ENCODE measurements at regions of chr6 and their contacts with region 1.

Region 1: GRCh38 chr6:27545271-27546046 is 72.6 kb upstream of the ZNF184 start:
- DNase-seq: peak; percentile 90
- ATAC-seq: peak; percentile 80
- H3K4me3 ChIP-seq: peak overlapping the region; percentile 68 to 80 (median 78)
- H3K27ac ChIP-seq: peak overlapping the region; percentile 55
- H3K4me1 ChIP-seq: peaks cover 29% of the 10 kb centered on the region
- H3K27me3 ChIP-seq: no peaks in the 10 kb centered on the region; a peak in 1 of 5 replicates
- CTCF ChIP-seq: no peak
- EP300 ChIP-seq: no peak
- POLR2A ChIP-seq: no peak
- RAD21 ChIP-seq: no peak

Region 2: GRCh38 chr6:27479319-27480182 is 65.9 kb before region 1 on chr6:
- CTCF ChIA-PET with region 1: no interaction called
- POLR2A ChIA-PET with region 1: no interaction called
- in situ Hi-C with region 1: no loop called
- intact Hi-C with region 1: loop called (anchors 2 kb)
- DNase-seq: peak; percentile 85
- ATAC-seq: peak; percentile 82
- H3K4me3 ChIP-seq: peak overlapping the region; percentile 80 to 87 (median 81)
- H3K27ac ChIP-seq: peak overlapping the region; percentile 74
- H3K4me1 ChIP-seq: peaks cover 26% of the 10 kb centered on the region
- H3K27me3 ChIP-seq: no peaks in the 10 kb centered on the region; a peak in 1 of 5 replicates
- CTCF ChIP-seq: no peak
- EP300 ChIP-seq: peak in 1 of 2 experiments; percentile 32; a peak in 1 of 4 replicates
- POLR2A ChIP-seq: no peak; a peak in 2 of 4 replicates
- RAD21 ChIP-seq: peak; percentile 16; the same call in 1 of the 2 replicates

Region 3: DNA sequence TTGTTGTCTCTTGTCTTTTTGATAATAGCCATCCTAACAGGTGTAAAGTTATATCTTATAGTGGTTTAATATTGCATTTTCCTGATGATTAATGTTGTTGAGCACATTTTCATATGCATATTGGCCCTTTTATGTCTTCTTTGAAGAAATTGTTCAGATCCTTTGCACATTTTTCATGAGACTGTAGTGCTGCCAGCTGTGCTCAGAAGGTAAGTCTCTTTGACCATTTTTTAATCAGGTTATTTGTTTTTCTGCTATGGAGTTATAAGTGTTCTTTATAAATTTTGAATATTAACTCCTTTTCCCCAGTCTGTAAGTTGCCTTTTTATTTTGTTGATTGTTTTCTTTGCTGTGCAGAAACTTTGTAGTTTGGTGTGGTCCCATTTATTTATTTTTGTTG is 16.7 kb before region 1 on chr6:
- CTCF ChIA-PET with region 1: no interaction called
- POLR2A ChIA-PET with region 1: no interaction called
- in situ Hi-C with region 1: no loop called
- intact Hi-C with region 1: loop called (anchors 1 kb)
- DNase-seq: no peak
- ATAC-seq: no peak
- H3K4me3 ChIP-seq: no peak overlapping the region
- H3K27ac ChIP-seq: no peak overlapping the region
- H3K4me1 ChIP-seq: 0 out of 2 replicates have a peak, but pooled peaks cover 8% of the 10 kb centered on the region
- H3K27me3 ChIP-seq: no peaks in the 10 kb centered on the region
- CTCF ChIP-seq: no peak
- EP300 ChIP-seq: no peak
- POLR2A ChIP-seq: no peak
- RAD21 ChIP-seq: no peak

Region 4: GRCh38 chr6:27592481-27593199 is 47.2 kb after region 1 on chr6:
- CTCF ChIA-PET with region 1: no interaction called
- POLR2A ChIA-PET with region 1: interaction called, 5 read pairs
- in situ Hi-C with region 1: no loop called
- intact Hi-C with region 1: loop called (anchors 5 kb)
- DNase-seq: peak; percentile 84
- ATAC-seq: peak; percentile 96
- H3K4me3 ChIP-seq: peak overlapping the region; percentile 58 to 76 (median 74)
- H3K27ac ChIP-seq: no peak overlapping the region
- H3K4me1 ChIP-seq: peaks cover 37% of the 10 kb centered on the region
- H3K27me3 ChIP-seq: peaks cover 0 to 22% of the 10 kb centered on the region in 2 experiments; a peak in 1 of 5 replicates
- CTCF ChIP-seq: no peak
- EP300 ChIP-seq: 0 out of 4 replicates have a peak, but pooled peaks of 1 of the 2 experiments have one; percentile 29
- POLR2A ChIP-seq: no peak
- RAD21 ChIP-seq: no peak

Region 5: GRCh38 chr6:27630727-27631608 is 85.5 kb after region 1 on chr6:
- CTCF ChIA-PET with region 1: no interaction called
- POLR2A ChIA-PET with region 1: no interaction called
- in situ Hi-C with region 1: no loop called
- intact Hi-C with region 1: no loop called
- DNase-seq: peak; percentile 74
- ATAC-seq: peak; percentile 94
- H3K4me3 ChIP-seq: peak overlapping the region; percentile 48 to 66 (median 55)
- H3K27ac ChIP-seq: no peak overlapping the region
- H3K4me1 ChIP-seq: peaks cover 20% of the 10 kb centered on the region
- H3K27me3 ChIP-seq: peaks cover 0 to 5% of the 10 kb centered on the region in 2 experiments; a peak in 3 of 5 replicates
- CTCF ChIP-seq: peak; percentile 45
- EP300 ChIP-seq: no peak
- POLR2A ChIP-seq: no peak
- RAD21 ChIP-seq: no peak

Region 6: GRCh38 chr6:27687154-27688013 is 141.9 kb after region 1 on chr6:
- CTCF ChIA-PET with region 1: no interaction called
- POLR2A ChIA-PET with region 1: no interaction called
- in situ Hi-C with region 1: no loop called
- intact Hi-C with region 1: loop called (anchors 1 kb)
- DNase-seq: peak; percentile 79
- ATAC-seq: peak; percentile 85
- H3K4me3 ChIP-seq: peak overlapping the region; percentile 65 to 93 (median 78)
- H3K27ac ChIP-seq: peak overlapping the region; percentile 15
- H3K4me1 ChIP-seq: peaks cover 56% of the 10 kb centered on the region
- H3K27me3 ChIP-seq: no peaks in the 10 kb centered on the region; a peak in 1 of 5 replicates
- CTCF ChIP-seq: peak; percentile 95
- EP300 ChIP-seq: no peak
- POLR2A ChIP-seq: no peak
- RAD21 ChIP-seq: peak; percentile 70